Activated CD4-positive, alpha-beta T cell treated with anti-CD3 and anti-CD28 coated beads for 36 hours (primary cell): ENCODE measurements at regions of chr19 and their contacts with region 1.

Region 1: DNA sequence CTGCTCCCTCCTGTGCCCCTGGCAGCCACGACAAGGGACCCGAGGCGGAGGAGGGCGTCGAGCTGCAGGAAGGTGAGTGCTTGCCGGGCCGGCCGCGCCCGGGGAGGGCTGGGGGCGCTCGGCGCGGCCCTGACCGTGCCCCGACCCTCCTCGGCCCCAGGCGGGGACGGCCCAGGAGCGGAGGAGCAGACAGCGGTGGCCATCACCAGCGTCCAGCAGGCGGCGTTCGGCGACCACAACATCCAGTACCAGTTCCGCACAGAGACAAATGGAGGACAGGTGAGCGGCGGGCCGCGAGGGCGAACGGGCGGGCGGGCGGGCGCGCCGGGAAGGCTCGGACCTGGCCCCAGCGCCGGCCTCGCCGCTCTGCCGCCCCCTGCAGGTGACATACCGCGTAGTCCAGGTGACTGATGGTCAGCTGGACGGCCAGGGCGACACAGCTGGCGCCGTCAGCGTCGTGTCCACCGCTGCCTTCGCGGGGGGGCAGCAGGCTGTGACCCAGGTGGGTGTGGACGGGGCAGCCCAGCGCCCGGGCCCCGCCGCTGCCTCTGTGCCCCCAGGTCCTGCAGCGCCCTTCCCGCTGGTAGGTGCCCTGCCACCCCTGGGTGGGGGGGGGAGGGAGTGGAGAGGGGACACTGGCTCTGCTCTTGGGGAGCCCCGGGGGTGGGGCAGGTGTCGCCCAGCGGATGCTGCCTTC is 807 bp downstream of the USF2 start:
- DNase-seq: peak; percentile 88
- ATAC-seq: peak; percentile 68
- H3K4me3 Mint-ChIP-seq: peak overlapping the region; percentile 63
- H3K27ac Mint-ChIP-seq: peak overlapping the region; percentile 63
- H3K4me1 Mint-ChIP-seq: peaks cover 20% of the 10 kb centered on the region
- H3K27me3 Mint-ChIP-seq: no peaks in the 10 kb centered on the region

Region 2: GRCh38 chr19:34904846-34905527 is 364.6 kb before region 1 on chr19:
- CTCF ChIA-PET with region 1: no interaction called
- POLR2A ChIA-PET with region 1: no interaction called
- intact Hi-C with region 1: no loop called
- DNase-seq: peak; percentile 15
- ATAC-seq: no peak
- H3K4me3 Mint-ChIP-seq: peak overlapping the region; percentile 56
- H3K27ac Mint-ChIP-seq: no peak overlapping the region
- H3K4me1 Mint-ChIP-seq: peaks cover 10% of the 10 kb centered on the region
- H3K27me3 Mint-ChIP-seq: peaks cover 43% of the 10 kb centered on the region

Region 3: GRCh38 chr19:35154525-35155406 is 114.8 kb before region 1 on chr19 and contains the start of gene FXYD5:
- CTCF ChIA-PET with region 1: interaction called, 4 read pairs
- POLR2A ChIA-PET with region 1: interaction called, 5 read pairs
- intact Hi-C with region 1: loop called (anchors 1 to 2 kb)
- DNase-seq: peak; percentile 93
- ATAC-seq: peak; percentile 81
- H3K4me3 Mint-ChIP-seq: peak within 1 kb of the TSS; percentile 96
- H3K27ac Mint-ChIP-seq: peak within 1 kb of the TSS; percentile 99
- H3K4me1 Mint-ChIP-seq: peaks cover 52% of the 10 kb centered on the region
- H3K27me3 Mint-ChIP-seq: no peaks in the 10 kb centered on the region
- total RNA-seq, gene FXYD5: 261 to 358 TPM

Region 4: GRCh38 chr19:35247526-35248306 is 21.9 kb before region 1 on chr19:
- CTCF ChIA-PET with region 1: no interaction called
- POLR2A ChIA-PET with region 1: no interaction called
- intact Hi-C with region 1: loop called in 1 of 2 experiments (anchors 1 kb)
- DNase-seq: peak; percentile 75
- ATAC-seq: peak; percentile 63
- H3K4me3 Mint-ChIP-seq: peak overlapping the region; percentile 79
- H3K27ac Mint-ChIP-seq: peak overlapping the region; percentile 87
- H3K4me1 Mint-ChIP-seq: peaks cover 22% of the 10 kb centered on the region
- H3K27me3 Mint-ChIP-seq: peaks cover 20% of the 10 kb centered on the region

Region 5: GRCh38 chr19:35495107-35496064 is 225.8 kb after region 1 on chr19:
- CTCF ChIA-PET with region 1: no interaction called
- POLR2A ChIA-PET with region 1: no interaction called
- intact Hi-C with region 1: loop called in 1 of 2 experiments (anchors 1 kb)
- DNase-seq: peak; percentile 91
- ATAC-seq: peak; percentile 97
- H3K4me3 Mint-ChIP-seq: no peak overlapping the region
- H3K27ac Mint-ChIP-seq: peak overlapping the region; percentile 43
- H3K4me1 Mint-ChIP-seq: peaks cover 5% of the 10 kb centered on the region
- H3K27me3 Mint-ChIP-seq: peaks cover 6% of the 10 kb centered on the region